Posterior vena cava (tissue), 2 donors: ENCODE measurements at regions of chr13 and their contacts with region 1.

Region 1: GRCh38 chr13:62502588-62502987 is 1086.9 kb upstream of the PCDH20 start:
- DNase-seq: no peak

Region 2: GRCh38 chr13:61880578-61881283 is 621.9 kb before region 1 on chr13:
- intact Hi-C with region 1: no loop called
- DNase-seq: no peak

Region 3: DNA sequence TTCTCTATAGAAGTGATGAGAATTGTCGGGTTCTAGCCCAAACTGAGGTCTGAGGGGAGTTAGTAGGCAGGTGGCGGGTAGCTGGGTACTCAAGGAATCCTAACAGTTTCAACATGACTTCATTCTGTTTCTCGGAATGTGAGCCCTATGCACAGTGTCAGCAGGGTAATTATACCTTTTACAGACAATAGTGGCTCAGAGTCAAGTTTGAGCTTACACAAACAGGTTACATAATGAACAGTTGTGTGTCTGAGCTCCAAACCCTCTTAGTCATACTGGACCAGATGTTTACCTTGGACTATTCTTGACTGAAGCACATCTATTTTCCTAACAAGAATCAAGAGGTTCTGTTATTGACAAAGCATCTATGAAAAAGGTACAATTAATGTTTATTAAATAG is 20.2 kb before region 1 on chr13:
- intact Hi-C with region 1: loop called in 1 of 2 experiments (anchors 1 kb)
- DNase-seq: no peak

Region 4: DNA sequence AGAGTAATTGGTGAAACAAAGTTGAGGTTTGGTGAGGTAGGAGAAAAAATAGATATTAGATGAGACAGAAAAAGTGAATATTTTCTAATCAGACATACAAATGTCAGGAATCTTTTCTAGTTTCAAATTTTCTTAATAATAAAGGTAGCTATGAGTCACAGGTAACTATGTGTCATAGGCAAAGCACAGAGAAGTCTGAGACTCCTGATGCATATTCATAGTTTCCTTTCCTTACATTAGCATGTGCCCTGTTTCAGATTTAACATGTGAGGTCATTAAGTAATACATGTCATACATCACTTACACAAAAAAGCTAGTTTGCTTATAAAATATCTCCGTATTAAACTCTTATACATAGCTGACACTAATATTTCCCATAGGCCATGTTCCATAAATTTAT is 54.4 kb after region 1 on chr13:
- intact Hi-C with region 1: no loop called
- DNase-seq: no peak